ENCODE measurements at regions of chr9 and their contacts with region 1.

Region 1: GRCh38 chr9:68999393-69000105 is 14.4 kb downstream of the PRKACG start:
- DNase-seq: peak in 8 of 9 donors; percentile 56 to 82 (median 74)
- ATAC-seq: peak; percentile 93
- H3K4me3 ChIP-seq: no peak overlapping the region
- H3K4me3 Mint-ChIP-seq: no peak overlapping the region
- H3K27ac ChIP-seq: no peak overlapping the region
- H3K27ac Mint-ChIP-seq: peak overlapping the region in 4 of 9 donors; percentile 14 to 75 (median 44)
- H3K4me1 ChIP-seq: peaks cover 0 to 15% of the 10 kb centered on the region in 2 donors
- H3K4me1 Mint-ChIP-seq: peaks cover 14 to 41% (median 30%) of the 10 kb centered on the region in 7 donors
- H3K27me3 ChIP-seq: no peaks in the 10 kb centered on the region
- H3K27me3 Mint-ChIP-seq: peaks cover 0 to 8% (median 0%) of the 10 kb centered on the region in 5 donors

Region 2: GRCh38 chr9:68584189-68585033 is 415.1 kb before region 1 on chr9:
- CTCF ChIA-PET with region 1: interaction called, 26 read pairs
- POLR2A ChIA-PET with region 1: no interaction called
- intact Hi-C with region 1: loop called (anchors 1 kb)
- DNase-seq: peak; percentile 64 to 89 (median 80)
- ATAC-seq: peak; percentile 100
- H3K4me3 ChIP-seq: no peak overlapping the region
- H3K4me3 Mint-ChIP-seq: no peak overlapping the region
- H3K27ac ChIP-seq: no peak overlapping the region
- H3K27ac Mint-ChIP-seq: peak overlapping the region in 1 of 9 donors; percentile 63
- H3K4me1 ChIP-seq: no peaks in the 10 kb centered on the region
- H3K4me1 Mint-ChIP-seq: peaks cover 0 to 5% (median 0%) of the 10 kb centered on the region in 7 donors
- H3K27me3 ChIP-seq: no peaks in the 10 kb centered on the region
- H3K27me3 Mint-ChIP-seq: peaks cover 0 to 14% (median 10%) of the 10 kb centered on the region in 5 donors

Region 3: GRCh38 chr9:68704814-68705530 is 294.6 kb before region 1 on chr9 and contains the start of gene PIP5K1B:
- CTCF ChIA-PET with region 1: interaction called, 5 read pairs
- POLR2A ChIA-PET with region 1: no interaction called
- intact Hi-C with region 1: loop called (anchors 2 kb)
- DNase-seq: peak in 6 of 9 donors; percentile 2 to 77 (median 13)
- ATAC-seq: peak; percentile 87
- H3K4me3 ChIP-seq: no peak within 1 kb of the TSS
- H3K4me3 Mint-ChIP-seq: peak within 1 kb of the TSS; percentile 67 to 95 (median 80)
- H3K27ac ChIP-seq: no peak within 1 kb of the TSS
- H3K27ac Mint-ChIP-seq: peak within 1 kb of the TSS in 1 of 9 donors; percentile 70
- H3K4me1 ChIP-seq: peaks cover 0 to 6% of the 10 kb centered on the region in 2 donors
- H3K4me1 Mint-ChIP-seq: peaks cover 5 to 25% (median 20%) of the 10 kb centered on the region in 7 donors
- H3K27me3 ChIP-seq: peaks cover 3 to 14% of the 10 kb centered on the region in 2 donors
- H3K27me3 Mint-ChIP-seq: peaks cover 74 to 86% (median 77%) of the 10 kb centered on the region in 5 donors
- total RNA-seq, gene PIP5K1B: 0.22 to 4.2 (median 1.5) TPM

Region 4: DNA sequence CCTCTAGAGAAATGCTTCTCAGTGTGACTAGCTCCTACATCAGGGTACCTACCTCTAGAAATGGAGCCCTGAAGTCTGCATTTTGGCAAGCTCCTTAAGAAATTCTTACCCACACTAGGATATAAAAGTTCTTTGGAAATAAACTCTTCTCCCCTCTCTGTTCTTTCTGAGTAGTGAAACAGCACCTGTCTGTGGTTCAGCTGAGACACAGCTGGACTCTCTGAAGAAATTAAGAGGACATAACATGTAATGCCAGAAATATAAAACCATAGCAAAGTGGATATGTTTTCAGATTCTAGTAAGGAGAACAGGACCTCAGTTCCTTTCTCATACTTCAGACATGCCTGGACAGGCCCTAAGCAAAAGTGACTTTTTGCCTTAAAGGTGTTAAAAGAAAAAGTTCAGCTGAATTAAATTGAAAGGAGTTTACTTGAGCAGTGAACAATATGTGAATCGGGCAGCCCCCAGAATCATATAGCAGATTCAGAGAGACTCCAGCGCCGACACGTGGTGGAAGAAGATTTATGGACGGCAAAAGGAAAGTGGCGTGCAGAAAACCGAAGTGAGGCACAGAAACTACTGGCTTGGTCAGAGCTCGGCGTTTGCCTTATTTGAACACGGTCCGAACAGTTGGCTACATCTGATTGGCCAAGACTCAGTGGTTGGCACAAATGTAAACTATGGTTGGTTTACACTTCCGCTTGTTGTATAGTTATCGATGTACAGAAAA is 50.1 kb before region 1 on chr9:
- CTCF ChIA-PET with region 1: interaction called, 29 read pairs
- POLR2A ChIA-PET with region 1: no interaction called
- intact Hi-C with region 1: loop called (anchors 1 to 2 kb)
- DNase-seq: peak in 7 of 9 donors; percentile 15 to 32 (median 24)
- ATAC-seq: no peak
- H3K4me3 ChIP-seq: no peak overlapping the region
- H3K4me3 Mint-ChIP-seq: peak overlapping the region in 1 of 10 donors; percentile 21
- H3K27ac ChIP-seq: no peak overlapping the region
- H3K27ac Mint-ChIP-seq: peak overlapping the region in 2 of 9 donors; percentile 43 to 57
- H3K4me1 ChIP-seq: no peaks in the 10 kb centered on the region
- H3K4me1 Mint-ChIP-seq: peaks cover 0 to 36% (median 0%) of the 10 kb centered on the region in 7 donors
- H3K27me3 ChIP-seq: no peaks in the 10 kb centered on the region
- H3K27me3 Mint-ChIP-seq: peaks cover 0 to 16% (median 0%) of the 10 kb centered on the region in 5 donors

Region 5: GRCh38 chr9:68974431-68974830 is 25.1 kb before region 1 on chr9:
- CTCF ChIA-PET with region 1: interaction called, 3 read pairs
- POLR2A ChIA-PET with region 1: no interaction called
- intact Hi-C with region 1: loop called in 1 of 2 experiments (anchors 1 kb)
- DNase-seq: no peak
- ATAC-seq: no peak
- H3K4me3 ChIP-seq: no peak overlapping the region
- H3K4me3 Mint-ChIP-seq: peak overlapping the region in 1 of 10 donors; percentile 54
- H3K27ac ChIP-seq: no peak overlapping the region
- H3K27ac Mint-ChIP-seq: peak overlapping the region in 2 of 9 donors; percentile 60 to 80
- H3K4me1 ChIP-seq: peaks cover 0 to 4% of the 10 kb centered on the region in 2 donors
- H3K4me1 Mint-ChIP-seq: peaks cover 2 to 50% (median 11%) of the 10 kb centered on the region in 7 donors
- H3K27me3 ChIP-seq: no peaks in the 10 kb centered on the region
- H3K27me3 Mint-ChIP-seq: no peaks in the 10 kb centered on the region

Region 6: DNA sequence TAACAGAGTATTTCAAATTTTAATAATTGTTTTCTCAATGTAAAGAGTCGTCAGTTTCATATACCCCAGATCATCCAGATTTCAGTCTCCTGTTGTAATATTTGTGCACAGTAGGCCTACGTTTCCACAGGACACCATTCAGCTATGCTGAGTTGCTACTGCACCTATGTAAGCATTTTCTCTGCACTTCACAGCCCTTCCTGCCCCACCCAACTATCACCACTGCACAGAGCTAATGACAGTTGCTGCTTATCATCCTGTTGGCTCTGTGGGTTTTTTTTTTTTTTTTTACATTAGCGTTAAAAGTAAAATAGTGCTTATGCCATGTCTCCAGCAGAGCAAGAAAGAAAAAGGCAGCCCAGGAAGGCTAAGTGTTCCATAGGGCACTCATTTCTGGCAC is 20.3 kb after region 1 on chr9:
- CTCF ChIA-PET with region 1: interaction called, 17 read pairs
- POLR2A ChIA-PET with region 1: interaction called, 3 read pairs
- intact Hi-C with region 1: no loop called
- DNase-seq: peak in 7 of 9 donors; percentile 54 to 75 (median 67)
- ATAC-seq: peak; percentile 97
- H3K4me3 ChIP-seq: no peak overlapping the region
- H3K4me3 Mint-ChIP-seq: peak overlapping the region; percentile 27 to 87 (median 58)
- H3K27ac ChIP-seq: no peak overlapping the region
- H3K27ac Mint-ChIP-seq: peak overlapping the region; percentile 52 to 83 (median 71)
- H3K4me1 ChIP-seq: peaks cover 7 to 21% of the 10 kb centered on the region in 2 donors
- H3K4me1 Mint-ChIP-seq: peaks cover 29 to 53% (median 47%) of the 10 kb centered on the region in 7 donors
- H3K27me3 ChIP-seq: no peaks in the 10 kb centered on the region
- H3K27me3 Mint-ChIP-seq: peaks cover 0 to 18% (median 3%) of the 10 kb centered on the region in 5 donors

Region 7: GRCh38 chr9:69027355-69028096 is 28.0 kb after region 1 on chr9:
- CTCF ChIA-PET with region 1: interaction called, 6 read pairs
- POLR2A ChIA-PET with region 1: interaction called, 3 read pairs
- intact Hi-C with region 1: loop called (anchors 1 kb)
- DNase-seq: peak in 7 of 9 donors; percentile 27 to 67 (median 61)
- ATAC-seq: peak; percentile 88
- H3K4me3 ChIP-seq: no peak overlapping the region
- H3K4me3 Mint-ChIP-seq: peak overlapping the region in 7 of 10 donors; percentile 6 to 61 (median 31)
- H3K27ac ChIP-seq: no peak overlapping the region
- H3K27ac Mint-ChIP-seq: peak overlapping the region in 8 of 9 donors; percentile 2 to 88 (median 62)
- H3K4me1 ChIP-seq: peaks cover 9 to 37% of the 10 kb centered on the region in 2 donors
- H3K4me1 Mint-ChIP-seq: peaks cover 33 to 69% (median 61%) of the 10 kb centered on the region in 7 donors
- H3K27me3 ChIP-seq: no peaks in the 10 kb centered on the region
- H3K27me3 Mint-ChIP-seq: peaks cover 0 to 12% (median 0%) of the 10 kb centered on the region in 5 donors

Region 8: DNA sequence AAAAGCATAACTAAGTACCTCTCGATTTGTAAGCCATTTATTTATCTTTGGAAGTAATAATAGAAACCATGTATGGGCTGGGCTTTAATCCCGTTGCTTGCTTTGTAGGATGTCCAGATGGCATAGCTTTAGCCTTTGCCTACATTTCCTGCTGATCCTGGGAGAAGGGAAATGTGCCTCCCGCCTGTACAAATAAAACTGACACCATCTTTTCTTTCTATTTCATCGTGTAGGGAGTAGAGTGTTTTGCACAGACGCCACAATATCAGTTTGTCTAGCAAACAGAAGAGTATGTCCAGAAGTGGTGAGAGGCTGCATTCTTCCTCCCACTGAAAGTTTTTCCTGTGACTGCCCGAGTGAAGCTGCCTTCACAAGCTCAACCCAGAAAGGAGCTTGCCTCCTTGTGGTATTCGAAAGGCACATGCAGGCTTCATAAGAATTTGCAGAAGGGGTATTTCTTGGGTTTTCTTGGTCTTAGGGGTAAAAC is 149.8 kb after region 1 on chr9:
- CTCF ChIA-PET with region 1: no interaction called
- POLR2A ChIA-PET with region 1: no interaction called
- intact Hi-C with region 1: no loop called
- DNase-seq: no peak
- ATAC-seq: no peak
- H3K4me3 ChIP-seq: no peak overlapping the region
- H3K4me3 Mint-ChIP-seq: no peak overlapping the region
- H3K27ac ChIP-seq: no peak overlapping the region
- H3K27ac Mint-ChIP-seq: no peak overlapping the region
- H3K4me1 ChIP-seq: no peaks in the 10 kb centered on the region
- H3K4me1 Mint-ChIP-seq: no peaks in the 10 kb centered on the region
- H3K27me3 ChIP-seq: no peaks in the 10 kb centered on the region
- H3K27me3 Mint-ChIP-seq: no peaks in the 10 kb centered on the region